Ascending aorta (tissue), 2 donors: ENCODE measurements at regions of chr15 and their contacts with region 1.

Region 1: DNA sequence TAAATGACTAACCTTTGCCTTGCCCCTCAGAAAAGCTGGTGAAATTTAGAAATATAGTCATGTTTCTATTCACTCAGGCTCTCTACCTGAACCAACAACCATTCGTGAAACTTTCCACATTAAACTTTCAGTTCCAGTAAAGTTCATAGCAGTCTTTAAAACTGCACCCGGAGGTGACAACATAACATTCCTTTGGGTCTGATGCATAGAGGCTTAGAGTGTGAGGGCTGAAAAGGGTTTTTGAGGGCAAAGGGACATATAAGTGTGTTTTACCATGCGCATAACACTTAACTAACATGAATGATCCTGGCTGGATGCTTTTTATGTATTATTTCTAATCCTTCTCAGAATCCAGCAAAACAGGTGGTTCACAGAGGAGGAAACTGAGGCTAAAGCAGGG is 471.7 kb upstream of the MCTP2 start:
- DNase-seq: no peak
- H3K4me3 ChIP-seq: no peak overlapping the region
- H3K27ac ChIP-seq: no peak overlapping the region
- H3K4me1 ChIP-seq: no peaks in the 10 kb centered on the region
- H3K27me3 ChIP-seq: no peaks in the 10 kb centered on the region
- CTCF ChIP-seq: no peak

Region 2: GRCh38 chr15:93683651-93684050 is 76.0 kb before region 1 on chr15:
- intact Hi-C with region 1: loop called (anchors 10 kb)
- DNase-seq: no peak
- H3K4me3 ChIP-seq: no peak overlapping the region
- H3K27ac ChIP-seq: no peak overlapping the region
- H3K4me1 ChIP-seq: no peaks in the 10 kb centered on the region
- H3K27me3 ChIP-seq: no peaks in the 10 kb centered on the region
- CTCF ChIP-seq: no peak